Naive thymus-derived CD4-positive, alpha-beta T cell (primary cell): ENCODE measurements at regions of chr16 and their contacts with region 1.

Region 1: GRCh38 chr16:3023669-3024478 is at the starts of genes HCFC1R1 and THOC6:
- DNase-seq: peak; percentile 86 to 96 (median 96)
- ATAC-seq: peak; percentile 89
- H3K4me3 ChIP-seq: peak within 1 kb of the TSS; percentile 87
- H3K4me3 Mint-ChIP-seq: peak within 1 kb of the TSS; percentile 78 to 98 (median 92)
- H3K27ac ChIP-seq: peak within 1 kb of the TSS; percentile 98
- H3K27ac Mint-ChIP-seq: peak within 1 kb of the TSS; percentile 85 to 99 (median 96)
- H3K4me1 ChIP-seq: peaks cover 42 to 50% of the 10 kb centered on the region in 2 donors
- H3K4me1 Mint-ChIP-seq: peaks cover 15 to 62% (median 50%) of the 10 kb centered on the region in 7 donors
- H3K27me3 ChIP-seq: peaks cover 0 to under 1% of the 10 kb centered on the region in 2 donors
- H3K27me3 Mint-ChIP-seq: peaks cover 0 to 5% (median 2%) of the 10 kb centered on the region in 5 donors
- total RNA-seq, gene HCFC1R1: 11.5 to 29.6 (median 14.9) TPM
- total RNA-seq, gene THOC6: 25.3 to 55.5 (median 26.0) TPM

Region 2: DNA sequence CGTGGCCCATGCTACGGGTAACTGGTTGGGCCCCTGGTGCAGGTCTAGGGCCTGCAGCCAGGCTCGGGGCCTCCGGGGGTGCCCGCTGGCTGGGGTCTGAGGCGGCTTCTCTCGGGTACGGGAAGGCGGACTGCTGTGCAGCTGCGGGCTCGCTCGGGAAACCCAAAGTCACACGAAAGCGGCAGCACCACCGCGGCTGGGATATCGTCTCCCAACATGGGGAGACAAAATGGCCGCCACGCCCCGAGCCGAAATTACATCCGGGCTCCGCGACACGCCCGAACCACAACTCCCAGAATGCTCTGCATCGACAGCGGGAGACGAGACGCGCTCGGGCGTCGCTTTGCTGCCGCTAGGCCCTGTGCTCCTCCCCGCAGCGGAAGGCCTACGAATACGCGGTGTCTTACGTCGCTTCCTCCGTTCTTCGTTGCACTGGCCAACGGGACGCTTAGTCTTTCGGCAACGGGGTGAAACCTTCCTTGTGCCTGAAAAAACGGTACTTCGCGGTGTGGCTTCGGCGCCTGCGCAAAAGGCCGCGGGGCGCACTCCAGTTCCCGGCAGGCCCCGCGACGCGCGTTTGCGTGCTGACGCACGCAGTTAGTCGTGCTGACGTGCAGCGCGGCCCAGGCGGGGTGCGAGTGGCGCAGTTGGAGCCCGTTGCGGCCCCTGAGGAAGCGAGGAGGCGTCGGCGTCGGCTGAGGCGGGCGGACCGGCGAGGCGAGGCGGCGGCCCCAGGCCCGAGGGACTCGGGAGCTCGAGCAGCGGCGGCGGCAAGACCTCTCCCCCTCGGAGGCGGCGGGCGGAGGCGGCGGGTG is 271.6 kb before region 1 on chr16 and contains the start of gene SRRM2:
- CTCF ChIA-PET with region 1: no interaction called
- POLR2A ChIA-PET with region 1: no interaction called
- intact Hi-C with region 1: no loop called
- DNase-seq: peak; percentile 92 to 98 (median 96)
- ATAC-seq: peak; percentile 92
- H3K4me3 ChIP-seq: peak within 1 kb of the TSS; percentile 68
- H3K4me3 Mint-ChIP-seq: peak within 1 kb of the TSS; percentile 89 to 98 (median 94)
- H3K27ac ChIP-seq: peak within 1 kb of the TSS; percentile 100
- H3K27ac Mint-ChIP-seq: peak within 1 kb of the TSS; percentile 96 to 100 (median 99)
- H3K4me1 ChIP-seq: peaks cover 35 to 40% of the 10 kb centered on the region in 2 donors
- H3K4me1 Mint-ChIP-seq: peaks cover 37 to 57% (median 50%) of the 10 kb centered on the region in 7 donors
- H3K27me3 ChIP-seq: no peaks in the 10 kb centered on the region
- H3K27me3 Mint-ChIP-seq: no peaks in the 10 kb centered on the region
- total RNA-seq, gene SRRM2: 590 to 1,259 (median 1,020) TPM

Region 3: GRCh38 chr16:2883027-2883851 is 140.6 kb before region 1 on chr16 and contains the start of gene FLYWCH2:
- CTCF ChIA-PET with region 1: no interaction called
- POLR2A ChIA-PET with region 1: no interaction called
- intact Hi-C with region 1: loop called in 1 of 2 experiments (anchors 2 kb)
- DNase-seq: peak; percentile 98 to 100 (median 100)
- ATAC-seq: peak; percentile 89
- H3K4me3 ChIP-seq: peak within 1 kb of the TSS; percentile 69
- H3K4me3 Mint-ChIP-seq: peak within 1 kb of the TSS; percentile 90 to 97 (median 94)
- H3K27ac ChIP-seq: peak within 1 kb of the TSS; percentile 84
- H3K27ac Mint-ChIP-seq: peak within 1 kb of the TSS; percentile 93 to 99 (median 97)
- H3K4me1 ChIP-seq: peaks cover 6% of the 10 kb centered on the region in 2 donors
- H3K4me1 Mint-ChIP-seq: peaks cover 0 to 18% (median 13%) of the 10 kb centered on the region in 7 donors
- H3K27me3 ChIP-seq: no peaks in the 10 kb centered on the region
- H3K27me3 Mint-ChIP-seq: no peaks in the 10 kb centered on the region
- total RNA-seq, gene FLYWCH2: 13.6 to 30.4 (median 24.0) TPM

Region 4: DNA sequence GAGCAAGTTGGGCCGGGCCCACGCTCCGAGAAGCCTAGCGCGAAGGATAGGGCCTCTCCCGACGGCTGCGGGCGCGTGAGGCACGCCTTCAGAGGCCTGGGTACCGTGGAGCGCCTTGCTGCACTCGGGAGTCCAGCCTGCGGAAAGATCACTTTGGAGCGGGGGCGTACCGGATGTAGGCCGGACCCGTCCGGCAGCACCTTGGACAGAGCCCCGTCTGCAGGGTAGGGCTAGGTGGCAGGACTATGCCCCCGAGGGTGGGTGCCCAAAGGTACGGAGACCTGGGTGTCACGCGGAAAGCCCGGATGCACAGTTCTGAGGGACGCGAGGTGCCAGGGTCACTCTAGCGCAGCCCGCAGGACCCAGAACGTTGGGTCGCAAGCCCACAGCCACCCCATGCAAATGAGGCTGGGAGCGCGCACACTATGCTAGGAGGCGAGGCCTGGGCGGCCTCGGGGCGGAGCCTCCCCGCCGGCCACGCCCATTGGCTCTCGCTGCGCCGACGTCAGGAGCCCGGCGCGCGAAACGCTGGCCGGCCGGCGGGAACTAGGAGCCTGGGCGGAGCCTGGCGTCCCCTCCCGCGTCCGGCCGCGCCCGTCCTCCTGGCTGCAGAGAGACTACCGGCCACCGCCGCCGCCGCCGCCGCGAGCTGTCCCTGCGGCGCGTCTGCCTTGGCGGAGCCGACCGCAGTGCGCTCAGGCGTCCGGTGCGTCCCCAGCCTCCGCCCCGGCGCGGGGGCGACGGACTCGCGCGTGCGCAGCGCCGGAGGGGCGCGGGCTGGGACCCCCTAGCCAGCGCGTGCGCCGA is 54.9 kb before region 1 on chr16 and contains the start of gene PAQR4:
- CTCF ChIA-PET with region 1: no interaction called
- POLR2A ChIA-PET with region 1: no interaction called
- intact Hi-C with region 1: loop called (anchors 1 kb)
- DNase-seq: peak; percentile 49 to 91 (median 71)
- ATAC-seq: peak; percentile 88
- H3K4me3 ChIP-seq: peak within 1 kb of the TSS; percentile 64
- H3K4me3 Mint-ChIP-seq: peak within 1 kb of the TSS; percentile 59 to 80 (median 75)
- H3K27ac ChIP-seq: no peak within 1 kb of the TSS
- H3K27ac Mint-ChIP-seq: peak within 1 kb of the TSS in 2 of 9 donors; percentile 16 to 70
- H3K4me1 ChIP-seq: peaks cover 19 to 28% of the 10 kb centered on the region in 2 donors
- H3K4me1 Mint-ChIP-seq: peaks cover 10 to 32% (median 24%) of the 10 kb centered on the region in 7 donors
- H3K27me3 ChIP-seq: peaks cover 0 to 28% of the 10 kb centered on the region in 2 donors
- H3K27me3 Mint-ChIP-seq: peaks cover 10 to 26% (median 16%) of the 10 kb centered on the region in 5 donors
- total RNA-seq, gene PAQR4: 0.40 to 39.4 (median 0.79) TPM

Region 5: GRCh38 chr16:2985893-2986355 is 38.0 kb before region 1 on chr16:
- CTCF ChIA-PET with region 1: no interaction called
- POLR2A ChIA-PET with region 1: no interaction called
- intact Hi-C with region 1: no loop called
- DNase-seq: no peak
- ATAC-seq: no peak
- H3K4me3 ChIP-seq: no peak overlapping the region
- H3K4me3 Mint-ChIP-seq: no peak overlapping the region
- H3K27ac ChIP-seq: no peak overlapping the region
- H3K27ac Mint-ChIP-seq: no peak overlapping the region
- H3K4me1 ChIP-seq: peaks cover 2% of the 10 kb centered on the region in 2 donors
- H3K4me1 Mint-ChIP-seq: peaks cover 9 to 16% (median 12%) of the 10 kb centered on the region in 7 donors
- H3K27me3 ChIP-seq: no peaks in the 10 kb centered on the region
- H3K27me3 Mint-ChIP-seq: peaks cover 0 to 9% (median 0%) of the 10 kb centered on the region in 5 donors

Region 6: DNA sequence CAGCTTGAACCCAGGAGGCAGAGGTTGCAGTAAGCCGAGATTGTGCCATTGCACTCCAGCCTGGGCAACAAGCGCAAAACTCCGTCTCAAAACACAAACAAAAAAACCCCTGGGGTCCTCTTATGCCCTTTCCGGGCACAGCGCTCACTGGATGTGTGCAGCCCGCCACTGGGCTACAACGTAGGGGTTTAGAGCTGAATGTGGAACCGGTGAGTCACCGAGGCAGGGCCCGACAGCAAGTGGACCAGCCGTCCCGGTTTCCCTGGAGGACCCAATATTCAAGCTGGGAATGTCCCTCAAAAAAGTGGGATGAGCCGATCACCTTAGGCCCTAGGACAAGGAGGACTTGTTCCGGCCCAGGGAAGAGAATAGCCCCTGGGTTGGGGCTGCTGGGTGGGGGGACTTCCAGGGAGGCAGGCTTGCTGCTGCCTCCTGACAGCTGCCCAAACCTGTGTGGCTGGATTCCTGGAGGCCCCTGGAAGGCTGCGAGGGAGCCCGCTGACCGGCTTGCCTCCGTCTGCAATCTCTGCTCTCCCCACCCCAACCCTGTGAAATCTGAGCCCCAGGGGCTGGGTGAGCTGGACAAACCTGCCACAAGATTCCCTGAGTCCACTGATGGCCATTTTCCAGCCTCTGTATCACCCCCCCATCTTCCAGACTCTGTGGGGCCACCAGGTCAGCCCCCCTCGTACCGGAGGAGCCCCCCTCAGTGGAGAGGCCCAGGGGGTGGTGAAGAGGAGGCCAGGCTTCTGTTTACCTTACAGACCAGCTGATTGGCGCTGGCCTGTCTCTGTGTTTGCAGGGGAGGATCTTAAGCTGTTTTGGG is 14.1 kb before region 1 on chr16:
- CTCF ChIA-PET with region 1: interaction called, 90 read pairs
- POLR2A ChIA-PET with region 1: interaction called, 17 read pairs
- intact Hi-C with region 1: loop called (anchors 1 kb)
- DNase-seq: no peak
- ATAC-seq: no peak
- H3K4me3 ChIP-seq: no peak overlapping the region
- H3K4me3 Mint-ChIP-seq: no peak overlapping the region
- H3K27ac ChIP-seq: no peak overlapping the region
- H3K27ac Mint-ChIP-seq: no peak overlapping the region
- H3K4me1 ChIP-seq: peaks cover 21 to 23% of the 10 kb centered on the region in 2 donors
- H3K4me1 Mint-ChIP-seq: peaks cover 18 to 34% (median 24%) of the 10 kb centered on the region in 7 donors
- H3K27me3 ChIP-seq: no peaks in the 10 kb centered on the region
- H3K27me3 Mint-ChIP-seq: peaks cover 0 to 24% (median 5%) of the 10 kb centered on the region in 5 donors

Region 7: GRCh38 chr16:3123986-3124886 is 100.4 kb after region 1 on chr16:
- CTCF ChIA-PET with region 1: interaction called, 98 read pairs
- POLR2A ChIA-PET with region 1: interaction called, 7 read pairs
- intact Hi-C with region 1: loop called in 1 of 2 experiments (anchors 1 kb)
- DNase-seq: peak; percentile 92 to 97 (median 96)
- ATAC-seq: peak; percentile 95
- H3K4me3 ChIP-seq: peak overlapping the region; percentile 90
- H3K4me3 Mint-ChIP-seq: peak overlapping the region; percentile 92 to 99 (median 96)
- H3K27ac ChIP-seq: peak overlapping the region; percentile 75
- H3K27ac Mint-ChIP-seq: peak overlapping the region; percentile 85 to 99 (median 97)
- H3K4me1 ChIP-seq: peaks cover 20 to 29% of the 10 kb centered on the region in 2 donors
- H3K4me1 Mint-ChIP-seq: peaks cover 16 to 51% (median 43%) of the 10 kb centered on the region in 7 donors
- H3K27me3 ChIP-seq: no peaks in the 10 kb centered on the region
- H3K27me3 Mint-ChIP-seq: no peaks in the 10 kb centered on the region

Region 8: DNA sequence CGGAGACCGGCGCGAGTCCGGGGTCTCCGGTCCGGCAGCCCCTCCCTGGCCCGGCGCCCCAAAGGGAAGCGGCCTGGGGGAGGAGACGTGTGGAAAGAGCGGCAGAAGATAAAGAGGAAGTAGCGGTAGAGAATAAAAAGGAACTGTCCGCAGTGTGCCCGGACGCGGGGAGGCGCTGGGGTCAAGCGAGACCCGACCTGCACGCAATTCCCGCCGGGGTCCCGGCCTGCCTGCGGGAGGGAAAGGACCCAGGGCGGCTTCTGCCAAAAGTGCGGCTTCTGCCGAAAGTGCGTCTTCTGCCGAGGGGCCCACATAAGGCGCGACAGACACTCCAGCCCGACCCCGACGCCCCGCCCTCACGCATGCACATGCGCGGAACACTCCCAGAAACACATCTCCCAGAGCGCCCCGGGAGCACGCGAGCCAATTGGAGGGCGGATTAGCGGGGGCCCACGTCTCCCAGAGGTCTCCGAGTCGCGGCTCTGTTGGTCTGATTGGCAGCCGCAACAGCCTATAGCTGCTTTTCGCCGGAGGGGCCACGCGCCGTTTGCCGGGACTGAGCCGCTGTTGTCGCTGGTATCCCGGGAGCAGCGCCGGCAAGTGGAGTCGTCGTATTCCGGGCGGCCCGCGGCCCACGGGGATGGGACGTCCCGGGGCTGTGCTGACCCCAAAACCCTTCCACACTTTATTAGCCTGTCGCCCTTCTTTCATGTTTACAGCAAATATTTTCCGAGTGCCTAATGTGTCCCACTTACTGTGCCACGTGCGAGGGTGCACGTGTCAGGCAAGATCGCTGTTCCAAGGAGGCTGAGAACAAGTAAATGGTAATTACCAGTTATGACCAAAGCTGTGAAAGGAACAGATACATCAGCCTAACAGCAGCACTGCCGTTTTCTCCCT is 240.5 kb after region 1 on chr16:
- CTCF ChIA-PET with region 1: no interaction called
- POLR2A ChIA-PET with region 1: interaction called, 4 read pairs
- intact Hi-C with region 1: loop called in 1 of 2 experiments (anchors 10 kb)
- DNase-seq: peak; percentile 88 to 97 (median 96)
- ATAC-seq: peak; percentile 88
- H3K4me3 ChIP-seq: peak overlapping the region; percentile 81
- H3K4me3 Mint-ChIP-seq: peak overlapping the region; percentile 84 to 97 (median 93)
- H3K27ac ChIP-seq: peak overlapping the region; percentile 92
- H3K27ac Mint-ChIP-seq: peak overlapping the region; percentile 93 to 98 (median 97)
- H3K4me1 ChIP-seq: peaks cover 18 to 20% of the 10 kb centered on the region in 2 donors
- H3K4me1 Mint-ChIP-seq: peaks cover 6 to 42% (median 29%) of the 10 kb centered on the region in 7 donors
- H3K27me3 ChIP-seq: no peaks in the 10 kb centered on the region
- H3K27me3 Mint-ChIP-seq: no peaks in the 10 kb centered on the region

Region 9: GRCh38 chr16:4253394-4254150 is 1229.7 kb after region 1 on chr16:
- CTCF ChIA-PET with region 1: no interaction called
- POLR2A ChIA-PET with region 1: no interaction called
- intact Hi-C with region 1: loop called in 1 of 2 experiments (anchors 5 kb)
- DNase-seq: peak; percentile 94 to 100 (median 100)
- ATAC-seq: peak; percentile 97
- H3K4me3 ChIP-seq: peak overlapping the region; percentile 92
- H3K4me3 Mint-ChIP-seq: peak overlapping the region; percentile 88 to 98 (median 96)
- H3K27ac ChIP-seq: peak overlapping the region; percentile 88
- H3K27ac Mint-ChIP-seq: peak overlapping the region; percentile 88 to 98 (median 96)
- H3K4me1 ChIP-seq: peaks cover 3 to 4% of the 10 kb centered on the region in 2 donors
- H3K4me1 Mint-ChIP-seq: peaks cover 0 to 16% (median 8%) of the 10 kb centered on the region in 7 donors
- H3K27me3 ChIP-seq: no peaks in the 10 kb centered on the region
- H3K27me3 Mint-ChIP-seq: no peaks in the 10 kb centered on the region